Endothelial cell of umbilical vein (primary cell): ENCODE measurements at regions of chr11 and their contacts with region 1.

Region 1: DNA sequence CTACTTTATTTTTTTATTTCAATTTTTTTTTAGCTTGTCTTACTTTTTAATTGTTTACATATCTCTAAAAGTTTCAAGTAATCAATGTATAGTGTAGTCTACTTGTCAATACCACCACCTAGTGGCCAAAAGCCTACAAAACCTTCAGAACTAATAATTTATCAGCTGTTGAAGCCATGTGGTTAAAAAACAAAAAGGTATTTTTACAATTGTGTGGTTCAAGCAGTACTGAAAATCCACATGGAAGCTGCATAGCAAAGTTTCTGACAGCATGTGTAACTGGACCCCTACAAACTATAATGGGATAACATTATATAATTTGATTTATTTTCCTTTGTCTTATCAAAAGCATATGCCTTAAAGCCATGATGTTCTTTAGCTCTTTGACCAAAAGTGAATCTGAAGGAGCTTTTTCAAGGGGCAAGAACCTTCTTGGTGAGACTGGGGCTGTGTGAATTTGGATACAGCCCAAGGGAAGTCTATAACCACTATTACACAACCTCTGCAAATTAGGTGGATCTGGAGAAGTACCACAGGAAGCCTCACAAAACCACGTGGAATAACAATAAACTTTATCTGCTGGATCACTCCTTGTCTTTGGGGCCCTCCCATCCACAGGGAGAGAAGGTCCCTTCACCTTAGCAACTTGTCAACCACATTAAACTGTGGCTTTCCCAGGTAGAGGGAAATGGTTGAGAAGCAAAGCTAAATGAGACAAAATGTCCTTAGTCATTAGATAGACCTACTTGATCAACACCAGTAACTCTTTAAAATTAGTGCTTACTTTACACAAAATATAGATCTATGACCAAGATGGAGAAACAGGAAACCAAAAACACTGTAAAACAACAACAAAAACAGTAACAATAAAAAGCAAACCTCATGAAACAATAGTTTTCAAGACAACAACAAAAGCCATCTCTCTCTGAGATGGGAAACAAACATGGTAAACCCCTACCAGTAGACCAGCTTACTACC is 9.9 kb downstream of the NARS2 start:
- DNase-seq: peak; percentile 83
- H3K4me3 ChIP-seq: no peak overlapping the region
- H3K27ac ChIP-seq: no peak overlapping the region
- H3K4me1 ChIP-seq: peaks cover 45% of the 10 kb centered on the region
- H3K27me3 ChIP-seq: no peaks in the 10 kb centered on the region
- CTCF ChIP-seq: peak; percentile 37 to 40
- POLR2A ChIP-seq: no peak

Region 2: GRCh38 chr11:78000193-78000592 is 564.6 kb before region 1 on chr11:
- CTCF ChIA-PET with region 1: interaction called, 13 read pairs
- POLR2A ChIA-PET with region 1: no interaction called
- dilution Hi-C with region 1: no loop called
- intact Hi-C with region 1: loop called (anchors 2 kb)
- DNase-seq: peak; percentile 74
- H3K4me3 ChIP-seq: no peak overlapping the region
- H3K27ac ChIP-seq: no peak overlapping the region
- H3K4me1 ChIP-seq: peaks cover 1% of the 10 kb centered on the region
- H3K27me3 ChIP-seq: peaks cover 0 to 2% of the 10 kb centered on the region in 2 experiments
- CTCF ChIP-seq: peak; percentile 70 to 74
- POLR2A ChIP-seq: no peak

Region 3: DNA sequence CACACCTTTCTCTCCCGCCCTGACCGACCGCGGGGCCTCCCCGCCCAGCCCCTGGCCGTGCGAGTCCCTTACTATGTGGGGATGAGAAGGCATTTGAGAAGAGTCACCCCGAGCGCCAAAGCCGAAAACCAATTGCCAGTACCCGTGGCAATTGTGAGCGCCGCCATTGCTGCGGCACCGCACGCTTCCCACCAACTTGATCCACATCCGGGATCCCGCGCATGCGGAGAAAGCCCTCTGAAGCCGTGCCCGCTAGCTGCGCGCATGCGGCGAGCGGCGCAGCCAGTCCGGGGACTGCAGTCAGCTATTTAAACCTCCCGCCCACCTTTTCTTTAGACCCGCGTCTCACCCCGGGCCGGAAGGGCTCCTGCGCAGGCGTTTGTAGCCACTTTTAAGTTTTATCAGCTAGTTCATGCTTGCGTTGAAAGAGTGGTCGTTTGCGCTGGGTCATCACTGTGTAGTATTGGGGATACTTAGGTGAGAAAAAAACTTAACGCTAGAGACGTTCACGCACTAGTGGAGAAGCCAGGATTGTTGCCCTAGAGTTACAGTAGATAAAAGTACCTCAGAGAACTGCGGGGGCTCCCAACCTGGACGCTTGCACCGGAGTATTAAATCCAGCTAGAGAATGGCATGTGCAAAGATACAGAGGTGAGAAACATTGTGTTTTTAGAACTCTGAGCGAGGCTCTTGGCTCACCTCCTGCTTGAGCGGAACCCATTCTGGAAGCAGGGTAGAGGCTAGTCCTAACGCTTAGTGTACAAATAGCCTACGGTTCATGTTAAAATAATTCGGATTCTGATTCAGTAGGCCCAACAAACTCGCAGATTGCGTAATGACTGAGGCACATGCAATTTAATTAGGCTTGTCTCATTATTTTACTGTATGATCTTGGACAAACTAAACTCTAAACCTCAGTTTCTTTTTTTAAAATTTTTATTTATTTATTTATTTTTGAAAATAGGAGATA is 425.1 kb before region 1 on chr11 and contains the start of gene ALG8:
- CTCF ChIA-PET with region 1: interaction called, 14 read pairs
- POLR2A ChIA-PET with region 1: no interaction called
- dilution Hi-C with region 1: no loop called
- intact Hi-C with region 1: loop called (anchors 5 kb)
- DNase-seq: peak; percentile 99
- H3K4me3 ChIP-seq: peak within 1 kb of the TSS; percentile 52 to 84 (median 69)
- H3K27ac ChIP-seq: peak within 1 kb of the TSS; percentile 60
- H3K4me1 ChIP-seq: peaks cover 15% of the 10 kb centered on the region
- H3K27me3 ChIP-seq: no peaks in the 10 kb centered on the region
- CTCF ChIP-seq: no peak
- POLR2A ChIP-seq: peak; percentile 89
- total RNA-seq, gene ALG8: 38.1 and 43.9 TPM in 2 replicates

Region 4: GRCh38 chr11:78220218-78221157 is 344.3 kb before region 1 on chr11:
- CTCF ChIA-PET with region 1: interaction called, 254 read pairs
- POLR2A ChIA-PET with region 1: no interaction called
- dilution Hi-C with region 1: no loop called
- intact Hi-C with region 1: no loop called
- DNase-seq: no peak
- H3K4me3 ChIP-seq: no peak overlapping the region
- H3K27ac ChIP-seq: no peak overlapping the region
- H3K4me1 ChIP-seq: no peaks in the 10 kb centered on the region
- H3K27me3 ChIP-seq: no peaks in the 10 kb centered on the region
- CTCF ChIP-seq: no peak
- POLR2A ChIP-seq: no peak

Region 5: DNA sequence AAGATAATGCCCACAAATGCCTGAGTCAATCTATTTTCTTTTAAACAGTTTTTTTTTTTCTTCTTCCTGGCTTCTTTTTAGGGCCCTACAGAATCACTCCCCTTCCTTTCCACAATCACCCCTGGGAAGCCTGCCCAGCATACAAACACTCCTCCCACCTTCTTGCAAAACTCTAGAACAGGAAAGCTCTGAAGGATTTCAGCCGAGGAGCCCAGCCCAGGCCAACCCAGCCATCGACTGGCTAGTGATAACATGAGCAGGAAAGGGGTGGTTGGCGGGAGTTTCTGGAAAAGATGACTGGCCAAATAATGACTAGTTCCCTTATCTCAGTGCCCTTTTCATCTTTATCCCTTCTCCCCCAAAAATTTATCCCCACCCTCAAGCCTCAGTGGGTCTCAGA is 307.8 kb before region 1 on chr11:
- CTCF ChIA-PET with region 1: interaction called, 11 read pairs
- POLR2A ChIA-PET with region 1: no interaction called
- dilution Hi-C with region 1: no loop called
- intact Hi-C with region 1: no loop called
- DNase-seq: peak; percentile 91
- H3K4me3 ChIP-seq: no peak overlapping the region
- H3K27ac ChIP-seq: no peak overlapping the region
- H3K4me1 ChIP-seq: peaks cover 21% of the 10 kb centered on the region
- H3K27me3 ChIP-seq: no peaks in the 10 kb centered on the region
- CTCF ChIP-seq: no peak
- POLR2A ChIP-seq: no peak

Region 6: DNA sequence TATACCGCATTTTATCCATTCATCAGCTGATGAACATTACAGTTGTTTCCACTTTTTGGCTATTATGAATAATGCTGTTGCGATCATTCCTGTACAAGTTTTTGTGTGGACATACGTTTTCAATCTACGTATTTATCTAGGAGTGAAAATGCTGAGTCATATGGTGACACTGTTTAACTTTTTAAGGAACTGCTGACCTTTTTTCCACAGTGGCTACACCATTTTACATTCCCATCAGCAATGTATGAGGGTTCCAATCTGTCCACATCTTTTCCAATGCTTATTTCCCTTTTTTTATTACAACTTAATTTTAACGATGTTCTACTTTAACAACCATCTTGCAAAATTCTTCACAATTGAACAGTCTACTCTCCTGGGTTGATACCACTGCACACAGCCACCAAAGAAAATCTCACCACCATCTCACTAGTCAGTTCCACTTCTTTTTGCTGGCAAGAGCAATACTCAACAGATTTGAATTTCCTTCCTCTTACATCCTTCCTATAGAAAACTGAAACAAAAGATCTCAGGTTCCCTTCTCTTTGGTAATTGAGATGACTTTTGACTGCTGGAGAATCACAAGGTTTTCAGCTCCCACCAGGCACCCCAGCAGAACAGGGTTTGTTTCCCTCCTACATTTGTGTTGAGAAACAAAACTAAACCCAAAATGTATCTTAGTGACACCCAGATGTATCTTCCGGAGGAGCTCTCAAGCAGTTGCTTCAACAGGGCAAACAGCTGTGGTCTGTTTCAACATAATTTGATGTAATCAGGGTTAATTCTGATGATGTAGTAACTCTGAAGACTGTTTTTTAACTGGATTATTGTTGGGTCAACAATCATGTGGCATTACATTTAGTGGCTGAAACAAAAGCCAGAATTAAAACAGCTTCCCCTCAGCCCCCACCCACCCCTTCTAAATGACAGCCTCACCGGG is 140.2 kb before region 1 on chr11:
- CTCF ChIA-PET with region 1: interaction called, 190 read pairs
- POLR2A ChIA-PET with region 1: no interaction called
- dilution Hi-C with region 1: no loop called
- intact Hi-C with region 1: no loop called
- DNase-seq: peak; percentile 44
- H3K4me3 ChIP-seq: no peak overlapping the region
- H3K27ac ChIP-seq: no peak overlapping the region
- H3K4me1 ChIP-seq: peaks cover 26% of the 10 kb centered on the region
- H3K27me3 ChIP-seq: no peaks in the 10 kb centered on the region
- CTCF ChIP-seq: no peak
- POLR2A ChIP-seq: no peak

Region 7: DNA sequence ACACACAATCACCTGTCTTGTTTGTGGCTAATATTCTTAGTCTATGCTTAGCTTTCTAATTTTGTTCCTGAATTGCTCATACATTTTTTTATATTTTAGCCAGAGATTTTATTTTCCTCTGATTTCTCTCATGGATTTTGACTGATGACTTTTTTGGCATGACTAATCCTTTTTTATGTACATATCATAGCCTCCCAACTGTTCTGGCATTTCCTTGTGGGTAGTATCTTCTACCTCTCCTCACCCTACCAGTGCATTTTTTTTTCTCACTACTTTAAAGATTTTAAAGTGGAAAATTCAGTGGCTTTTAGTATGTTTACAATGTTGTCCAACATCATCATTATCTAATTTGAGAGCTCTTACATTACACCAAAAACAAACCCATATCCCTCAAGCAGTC is 960.5 kb after region 1 on chr11:
- CTCF ChIA-PET with region 1: no interaction called
- POLR2A ChIA-PET with region 1: no interaction called
- dilution Hi-C with region 1: no loop called
- intact Hi-C with region 1: no loop called
- DNase-seq: no peak
- H3K4me3 ChIP-seq: no peak overlapping the region
- H3K27ac ChIP-seq: no peak overlapping the region
- H3K4me1 ChIP-seq: no peaks in the 10 kb centered on the region
- H3K27me3 ChIP-seq: no peaks in the 10 kb centered on the region
- CTCF ChIP-seq: no peak
- POLR2A ChIP-seq: no peak